ENCODE measurements at regions of chr3 and their contacts with region 1.

Region 1: GRCh38 chr3:149120051-149120972 is 9.1 kb upstream of the HPS3 start:
- DNase-seq: no peak
- ATAC-seq: peak; percentile 81
- H3K4me3 Mint-ChIP-seq: no peak overlapping the region
- H3K27ac Mint-ChIP-seq: no peak overlapping the region
- H3K4me1 Mint-ChIP-seq: peaks cover 7% of the 10 kb centered on the region
- H3K27me3 Mint-ChIP-seq: no peaks in the 10 kb centered on the region
- CTCF ChIP-seq: peak; percentile 16

Region 2: DNA sequence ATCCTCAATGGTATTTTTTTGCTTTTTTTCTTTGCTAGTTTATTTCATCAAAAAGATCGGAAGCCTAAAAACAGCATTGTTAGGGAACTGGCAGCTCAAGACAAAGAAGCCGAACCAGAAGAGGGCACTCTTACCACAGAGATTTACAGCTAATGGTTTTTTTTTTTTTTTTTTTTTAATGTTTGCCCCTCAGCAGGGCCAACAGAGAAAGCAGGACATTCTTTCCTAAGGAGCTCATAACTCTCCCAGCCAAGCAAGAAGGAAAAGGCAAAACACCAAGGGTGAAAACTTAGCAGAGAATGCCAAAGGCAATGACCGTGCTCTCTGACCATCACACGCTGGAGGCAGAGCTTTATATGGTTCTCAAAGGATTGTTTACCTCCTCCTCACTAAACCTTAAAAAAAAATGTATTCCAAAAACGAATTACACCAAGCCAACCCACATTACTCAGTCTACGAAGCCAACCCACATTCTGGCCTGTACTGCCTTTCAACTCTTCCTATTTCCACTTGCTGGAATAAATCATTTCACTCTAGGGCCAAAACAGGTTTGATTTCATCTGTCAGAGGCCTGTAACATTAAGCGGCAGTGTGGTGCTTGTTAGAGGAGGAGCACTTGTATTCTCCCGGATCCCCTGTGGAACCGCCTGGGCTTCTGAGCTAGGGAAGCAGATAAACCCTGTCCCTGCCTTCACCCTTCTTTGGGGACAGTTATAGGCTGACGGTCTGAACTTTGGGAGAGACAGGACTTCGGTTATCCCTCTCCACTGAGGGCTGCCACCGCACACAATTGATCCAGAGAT is 164.6 kb before region 1 on chr3:
- CTCF ChIA-PET with region 1: interaction called, 25 read pairs
- POLR2A ChIA-PET with region 1: no interaction called
- intact Hi-C with region 1: loop called (anchors 1 kb)
- DNase-seq: no peak
- ATAC-seq: no peak
- H3K4me3 Mint-ChIP-seq: no peak overlapping the region
- H3K27ac Mint-ChIP-seq: no peak overlapping the region
- H3K4me1 Mint-ChIP-seq: no peaks in the 10 kb centered on the region
- H3K27me3 Mint-ChIP-seq: peaks cover 7% of the 10 kb centered on the region
- CTCF ChIP-seq: no peak

Region 3: GRCh38 chr3:149145974-149146373 is 25.7 kb after region 1 on chr3:
- CTCF ChIA-PET with region 1: interaction called, 10 read pairs
- POLR2A ChIA-PET with region 1: interaction called, 4 read pairs
- intact Hi-C with region 1: no loop called
- DNase-seq: no peak
- ATAC-seq: peak; percentile 87
- H3K4me3 Mint-ChIP-seq: no peak overlapping the region
- H3K27ac Mint-ChIP-seq: no peak overlapping the region
- H3K4me1 Mint-ChIP-seq: peaks cover 32% of the 10 kb centered on the region
- H3K27me3 Mint-ChIP-seq: no peaks in the 10 kb centered on the region
- CTCF ChIP-seq: no peak

Region 4: DNA sequence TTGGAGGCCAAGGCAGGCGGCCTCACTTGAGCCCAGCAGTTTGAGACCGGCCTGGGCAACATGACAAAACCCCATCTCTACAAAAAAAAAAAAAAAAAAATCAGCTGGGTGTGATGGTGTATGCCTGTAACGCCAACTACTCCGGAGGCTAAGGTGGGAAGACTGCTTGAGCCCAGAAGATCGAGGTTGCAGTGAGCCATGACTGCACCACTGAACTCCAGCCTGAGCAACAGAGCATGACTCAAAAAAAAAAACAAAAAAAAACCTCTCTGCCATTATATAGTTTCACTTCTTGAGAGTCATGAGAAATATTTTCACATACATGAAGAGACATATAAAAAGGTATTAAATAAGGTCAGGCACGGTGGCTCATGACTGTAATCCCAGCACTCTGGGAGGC is 147.3 kb after region 1 on chr3:
- CTCF ChIA-PET with region 1: interaction called, 208 read pairs
- POLR2A ChIA-PET with region 1: no interaction called
- intact Hi-C with region 1: no loop called
- DNase-seq: no peak
- ATAC-seq: peak; percentile 69
- H3K4me3 Mint-ChIP-seq: peak overlapping the region; percentile 56
- H3K27ac Mint-ChIP-seq: no peak overlapping the region
- H3K4me1 Mint-ChIP-seq: peaks cover 29% of the 10 kb centered on the region
- H3K27me3 Mint-ChIP-seq: no peaks in the 10 kb centered on the region
- CTCF ChIP-seq: no peak

Region 5: DNA sequence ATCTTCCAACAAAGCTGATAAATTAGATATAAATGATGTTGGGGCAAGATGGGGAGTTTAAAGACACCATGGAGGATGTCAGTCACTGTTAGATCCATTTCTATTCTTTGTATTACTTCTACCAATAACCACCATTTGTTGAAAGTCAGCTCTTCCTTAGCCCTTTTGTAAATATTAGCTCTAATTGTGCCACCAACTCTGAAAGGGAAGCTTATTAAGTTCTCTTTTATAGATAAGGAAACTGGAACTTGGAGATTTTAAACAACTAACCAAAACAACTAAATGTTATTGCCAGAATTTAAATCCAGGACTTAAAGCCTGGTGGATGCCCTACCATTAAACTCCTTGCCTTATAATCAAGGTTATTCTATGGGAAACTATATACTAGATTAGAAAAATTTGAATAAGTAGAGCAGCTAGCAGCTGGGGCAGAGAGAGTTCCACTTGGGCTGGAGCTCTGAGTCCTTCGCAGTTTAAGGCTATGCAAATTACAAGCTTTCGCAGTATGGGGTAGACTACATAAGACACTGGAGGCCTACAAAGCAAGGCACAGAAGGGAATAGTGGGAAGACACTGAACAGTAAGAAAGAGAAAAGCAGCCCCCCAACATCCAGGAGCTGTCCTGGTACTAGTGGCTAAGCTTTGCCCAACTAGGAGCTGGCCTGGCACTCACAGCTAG is 160.5 kb after region 1 on chr3:
- CTCF ChIA-PET with region 1: interaction called, 208 read pairs
- POLR2A ChIA-PET with region 1: interaction called, 3 read pairs
- intact Hi-C with region 1: no loop called
- DNase-seq: no peak
- ATAC-seq: no peak
- H3K4me3 Mint-ChIP-seq: no peak overlapping the region
- H3K27ac Mint-ChIP-seq: peak overlapping the region; percentile 33
- H3K4me1 Mint-ChIP-seq: peaks cover 21% of the 10 kb centered on the region
- H3K27me3 Mint-ChIP-seq: no peaks in the 10 kb centered on the region
- CTCF ChIP-seq: no peak